ENCODE measurements at regions of chr20 and their contacts with region 1.

Region 1: DNA sequence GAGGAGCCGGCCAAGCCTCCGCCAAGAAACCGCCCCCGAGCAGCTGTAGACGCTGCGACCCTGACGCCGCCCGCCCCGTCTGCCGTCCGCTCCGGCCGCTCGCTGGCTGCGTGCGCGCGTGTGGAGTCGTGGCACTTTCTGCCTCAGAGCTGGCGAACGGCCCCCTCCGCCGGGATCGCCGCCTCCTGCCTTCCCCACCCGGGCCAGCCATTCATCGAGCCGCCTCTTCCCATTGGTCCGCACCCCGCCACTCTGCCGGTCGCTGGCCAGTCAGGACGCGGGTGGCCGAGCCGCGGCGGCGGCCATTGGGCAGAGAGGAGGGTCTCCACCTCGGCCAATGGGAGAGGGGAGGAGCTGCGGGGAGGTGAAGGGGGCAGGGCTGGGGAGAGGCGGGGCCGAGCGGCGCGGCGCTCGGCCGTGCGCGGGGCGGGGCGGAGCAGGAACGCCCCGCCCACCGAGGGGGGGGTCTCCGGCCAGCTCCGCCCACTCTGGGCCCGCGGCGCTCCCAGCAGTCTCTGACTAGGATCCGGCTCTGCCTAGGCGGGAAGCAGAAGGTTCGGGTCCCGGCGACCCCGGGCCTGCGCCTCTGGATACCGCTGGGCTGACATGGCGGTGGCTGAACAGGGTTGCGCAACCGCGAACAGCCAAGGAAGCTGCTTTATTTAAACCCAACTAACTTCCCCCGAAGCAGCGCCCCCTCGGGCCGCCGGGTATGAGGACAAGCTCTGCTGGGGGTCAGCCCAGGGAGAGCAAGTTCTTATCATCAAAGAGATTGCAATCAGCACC is at the start of gene RRBP1:
- DNase-seq: peak; percentile 98 to 99
- H3K4me3 ChIP-seq: peak within 1 kb of the TSS; percentile 79 to 90
- H3K27ac ChIP-seq: peak within 1 kb of the TSS; percentile 82 to 87
- H3K4me1 ChIP-seq: peaks cover 0 to 18% (median 12%) of the 10 kb centered on the region in 4 donors
- H3K27me3 ChIP-seq: peaks cover 0 to 6% of the 10 kb centered on the region in 2 donors
- CTCF ChIP-seq: peak; percentile 58 to 64

Region 2: DNA sequence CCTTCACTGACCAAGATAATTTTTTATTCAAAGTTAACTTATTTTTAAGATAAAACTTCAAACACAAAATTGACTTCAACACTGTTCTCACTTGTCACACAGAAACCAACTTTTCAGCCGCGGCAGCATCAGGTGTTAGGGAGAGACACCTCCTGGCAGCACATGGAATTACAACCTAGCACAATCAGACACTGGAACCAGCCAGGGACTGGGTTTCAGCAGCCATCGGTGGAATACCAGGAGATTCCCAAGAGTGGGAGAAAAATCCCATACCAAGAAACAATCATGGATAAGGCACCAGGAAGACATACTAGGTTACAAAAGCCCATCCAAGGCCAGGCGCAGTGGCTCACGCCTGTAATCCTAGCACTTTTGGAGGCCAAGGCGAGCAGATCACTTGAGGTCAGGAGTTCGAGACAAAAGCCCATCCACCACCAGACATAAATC is 216.3 kb after region 1 on chr20:
- intact Hi-C with region 1: loop called (anchors 5 kb)
- DNase-seq: peak; percentile 83 to 87
- H3K4me3 ChIP-seq: no peak overlapping the region
- H3K27ac ChIP-seq: no peak overlapping the region
- H3K4me1 ChIP-seq: peaks cover 0 to 24% (median 13%) of the 10 kb centered on the region in 4 donors
- H3K27me3 ChIP-seq: no peaks in the 10 kb centered on the region
- CTCF ChIP-seq: peak; percentile 92 to 93